HepG2 (cell line): ENCODE measurements at regions of chr2 and their contacts with region 1.

Region 1: DNA sequence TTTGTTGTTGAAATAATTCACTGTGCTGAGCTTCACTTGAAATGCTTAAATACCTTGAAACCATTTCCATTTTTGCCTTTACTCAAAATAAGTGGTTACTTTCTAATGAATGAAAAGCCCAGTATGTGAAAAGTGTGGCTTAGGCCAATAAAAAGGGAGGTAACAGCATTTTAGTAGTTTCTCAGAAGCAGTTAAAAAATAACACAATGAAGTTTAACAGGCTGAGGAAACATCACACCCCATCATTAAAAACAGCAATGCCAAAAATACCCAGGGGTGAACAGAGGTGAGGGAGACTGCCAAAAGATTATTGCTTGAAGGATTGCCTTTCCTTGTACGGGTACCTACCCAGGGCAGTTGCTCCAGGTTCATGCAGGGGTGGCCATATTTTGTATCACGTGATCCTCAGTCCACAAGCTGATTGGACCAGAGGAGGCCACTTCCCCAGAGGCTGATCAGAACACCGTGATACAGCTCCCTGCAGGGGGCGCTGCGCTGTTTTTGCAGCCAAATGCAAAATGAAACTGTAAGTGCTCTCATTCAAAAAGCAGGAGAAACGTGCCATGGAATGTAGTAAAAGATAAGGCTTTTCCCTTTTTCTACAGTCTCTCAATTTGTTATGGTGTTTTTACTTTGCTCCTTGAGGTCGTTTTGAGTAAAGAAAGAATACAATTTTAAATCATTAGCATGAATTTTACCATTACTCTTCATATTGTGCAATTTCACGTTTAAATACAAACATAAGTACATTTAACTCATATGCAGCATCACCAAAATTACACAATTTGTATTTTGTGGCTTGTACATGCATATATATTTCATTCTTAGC is 70.2 kb upstream of the SH3BP4 start:
- DNase-seq: peak; percentile 98
- ATAC-seq: peak; percentile 96
- H3K4me3 ChIP-seq: peak overlapping the region; percentile 4 to 64 (median 38); a peak in 3 of 6 replicates
- H3K27ac ChIP-seq: peak overlapping the region; percentile 84
- H3K4me1 ChIP-seq: peaks cover 68% of the 10 kb centered on the region
- H3K27me3 ChIP-seq: no peaks in the 10 kb centered on the region
- CTCF ChIP-seq: peak; percentile 97
- EP300 ChIP-seq: peak in 1 of 2 experiments; percentile 58; a peak in 2 of 4 replicates
- POLR2A ChIP-seq: peak; percentile 54 to 58; a peak in 3 of 4 replicates
- RAD21 ChIP-seq: peak; percentile 92

Region 2: DNA sequence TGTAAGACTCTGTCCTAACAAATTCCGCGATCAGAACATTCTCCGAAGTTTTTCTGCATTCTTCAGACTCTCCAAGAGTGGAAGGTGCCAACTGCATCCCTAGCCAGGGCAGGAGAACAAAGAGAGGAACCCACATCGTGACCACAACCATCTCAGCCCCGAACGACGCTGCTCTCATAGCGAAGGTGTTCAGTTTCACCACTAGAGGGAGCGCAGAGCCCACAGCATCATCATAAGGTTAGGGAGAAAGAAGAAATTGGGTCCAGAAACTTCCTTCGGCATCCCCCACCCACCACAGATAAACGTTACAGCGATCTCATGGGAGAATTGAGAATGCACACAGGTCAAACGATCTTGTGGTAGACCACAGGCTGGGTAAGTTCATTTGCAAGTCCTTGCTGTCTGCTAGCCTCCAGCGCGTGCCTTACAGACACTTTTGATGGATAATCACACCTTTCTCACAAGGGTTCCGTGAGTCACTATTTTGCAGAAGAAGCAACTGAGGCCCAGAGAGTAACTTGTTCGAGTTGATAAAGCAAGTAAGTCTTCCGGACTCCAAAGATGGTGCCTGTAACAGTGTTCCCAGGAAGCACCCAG is 331.0 kb before region 1 on chr2:
- CTCF ChIA-PET with region 1: no interaction called
- POLR2A ChIA-PET with region 1: interaction called, 5 read pairs
- in situ Hi-C with region 1: loop called (anchors 10 kb)
- intact Hi-C with region 1: loop called (anchors 1 kb)
- DNase-seq: peak; percentile 73
- ATAC-seq: peak; percentile 88
- H3K4me3 ChIP-seq: no peak overlapping the region
- H3K27ac ChIP-seq: no peak overlapping the region
- H3K4me1 ChIP-seq: peaks cover 33% of the 10 kb centered on the region
- H3K27me3 ChIP-seq: peaks cover 2 to 33% of the 10 kb centered on the region in 2 experiments; a peak in 4 of 5 replicates
- CTCF ChIP-seq: peak; percentile 99
- EP300 ChIP-seq: no peak
- POLR2A ChIP-seq: no peak
- RAD21 ChIP-seq: peak; percentile 97

Region 3: GRCh38 chr2:234690569-234691213 is 190.9 kb before region 1 on chr2:
- CTCF ChIA-PET with region 1: no interaction called
- POLR2A ChIA-PET with region 1: interaction called, 72 read pairs
- in situ Hi-C with region 1: no loop called
- intact Hi-C with region 1: no loop called
- DNase-seq: peak; percentile 42
- ATAC-seq: no peak
- H3K4me3 ChIP-seq: no peak overlapping the region
- H3K27ac ChIP-seq: peak overlapping the region; percentile 79
- H3K4me1 ChIP-seq: peaks cover 98% of the 10 kb centered on the region
- H3K27me3 ChIP-seq: no peaks in the 10 kb centered on the region
- CTCF ChIP-seq: 0 out of 2 replicates have a peak, but pooled peaks have one; percentile 3
- EP300 ChIP-seq: no peak
- POLR2A ChIP-seq: no peak
- RAD21 ChIP-seq: peak; percentile 10; the same call in 1 of the 2 replicates

Region 4: GRCh38 chr2:234745347-234745746 is 136.3 kb before region 1 on chr2:
- CTCF ChIA-PET with region 1: no interaction called
- POLR2A ChIA-PET with region 1: no interaction called
- in situ Hi-C with region 1: no loop called
- intact Hi-C with region 1: no loop called
- DNase-seq: no peak
- ATAC-seq: peak; percentile 25; the same call in 1 of the 3 replicates
- H3K4me3 ChIP-seq: no peak overlapping the region
- H3K27ac ChIP-seq: no peak overlapping the region
- H3K4me1 ChIP-seq: peaks cover 16% of the 10 kb centered on the region
- H3K27me3 ChIP-seq: no peaks in the 10 kb centered on the region
- CTCF ChIP-seq: peak; percentile 43
- EP300 ChIP-seq: no peak
- POLR2A ChIP-seq: no peak
- RAD21 ChIP-seq: no peak

Region 5: GRCh38 chr2:234823877-234824376 is 57.7 kb before region 1 on chr2:
- CTCF ChIA-PET with region 1: no interaction called
- POLR2A ChIA-PET with region 1: interaction called, 15 read pairs
- in situ Hi-C with region 1: no loop called
- intact Hi-C with region 1: loop called (anchors 1 kb)
- DNase-seq: peak; percentile 80
- ATAC-seq: peak; percentile 91
- H3K4me3 ChIP-seq: peak overlapping the region in 2 of 3 experiments; percentile 23 to 28; a peak in 2 of 6 replicates
- H3K27ac ChIP-seq: peak overlapping the region; percentile 1
- H3K4me1 ChIP-seq: peaks cover 47% of the 10 kb centered on the region
- H3K27me3 ChIP-seq: no peaks in the 10 kb centered on the region
- CTCF ChIP-seq: no peak
- EP300 ChIP-seq: peak in 1 of 2 experiments; percentile 60; a peak in 1 of 4 replicates
- POLR2A ChIP-seq: no peak
- RAD21 ChIP-seq: no peak; the same call in 1 of the 2 replicates

Region 6: GRCh38 chr2:234858128-234858527 is 23.5 kb before region 1 on chr2:
- CTCF ChIA-PET with region 1: no interaction called
- POLR2A ChIA-PET with region 1: interaction called, 38 read pairs
- in situ Hi-C with region 1: no loop called
- intact Hi-C with region 1: no loop called
- DNase-seq: no peak
- ATAC-seq: no peak
- H3K4me3 ChIP-seq: no peak overlapping the region
- H3K27ac ChIP-seq: no peak overlapping the region
- H3K4me1 ChIP-seq: peaks cover 84% of the 10 kb centered on the region
- H3K27me3 ChIP-seq: no peaks in the 10 kb centered on the region
- CTCF ChIP-seq: no peak
- EP300 ChIP-seq: no peak
- POLR2A ChIP-seq: no peak
- RAD21 ChIP-seq: no peak

Region 7: GRCh38 chr2:234981197-234982117 is 99.8 kb after region 1 on chr2:
- CTCF ChIA-PET with region 1: no interaction called
- POLR2A ChIA-PET with region 1: interaction called, 46 read pairs
- in situ Hi-C with region 1: no loop called
- intact Hi-C with region 1: loop called (anchors 2 kb)
- DNase-seq: peak; percentile 94
- ATAC-seq: peak; percentile 59
- H3K4me3 ChIP-seq: peak overlapping the region; percentile 41 to 64 (median 48)
- H3K27ac ChIP-seq: peak overlapping the region; percentile 88
- H3K4me1 ChIP-seq: peaks cover 100% of the 10 kb centered on the region
- H3K27me3 ChIP-seq: no peaks in the 10 kb centered on the region; a peak in 1 of 5 replicates
- CTCF ChIP-seq: peak; percentile 63
- EP300 ChIP-seq: peak; percentile 3 to 71; a peak in 3 of 4 replicates
- POLR2A ChIP-seq: peak; percentile 27 to 72; a peak in 3 of 4 replicates
- RAD21 ChIP-seq: peak; percentile 36; the same call in 1 of the 2 replicates

Region 8: GRCh38 chr2:235106874-235107639 is 225.4 kb after region 1 on chr2:
- CTCF ChIA-PET with region 1: no interaction called
- POLR2A ChIA-PET with region 1: interaction called, 6 read pairs
- in situ Hi-C with region 1: no loop called
- intact Hi-C with region 1: loop called (anchors 2 kb)
- DNase-seq: peak; percentile 79
- ATAC-seq: peak; percentile 88
- H3K4me3 ChIP-seq: no peak overlapping the region
- H3K27ac ChIP-seq: no peak overlapping the region
- H3K4me1 ChIP-seq: peaks cover 30% of the 10 kb centered on the region
- H3K27me3 ChIP-seq: peaks cover 7 to 39% of the 10 kb centered on the region in 2 experiments
- CTCF ChIP-seq: peak; percentile 95
- EP300 ChIP-seq: no peak
- POLR2A ChIP-seq: no peak
- RAD21 ChIP-seq: peak; percentile 88